Activated T-helper 2 cell treated with anti-CD3 and anti-CD28 coated beads, Interferon-gamma antibody, Interleukin-2, Interleukin-4, amounts not matched to agents 10 μg/mL and 5 μg/mL and 100 μg/mL, durations not matched to agents 14 hours and 24 hours and 36 hours (primary cell): ENCODE measurements at regions of chrX and their contacts with region 1.

Region 1: GRCh38 chrX:110450050-110450449 is 91.4 kb downstream of the RTL9 start:
- DNase-seq: peak; percentile 18
- H3K4me3 Mint-ChIP-seq: no peak overlapping the region
- H3K27ac Mint-ChIP-seq: no peak overlapping the region
- H3K4me1 Mint-ChIP-seq: no peaks in the 10 kb centered on the region
- H3K27me3 Mint-ChIP-seq: no peaks in the 10 kb centered on the region

Region 2: GRCh38 chrX:110665223-110666002 is 215.4 kb after region 1 on chrX:
- intact Hi-C with region 1: loop called (anchors 1 kb)
- DNase-seq: no peak
- H3K4me3 Mint-ChIP-seq: no peak overlapping the region
- H3K27ac Mint-ChIP-seq: no peak overlapping the region
- H3K4me1 Mint-ChIP-seq: no peaks in the 10 kb centered on the region
- H3K27me3 Mint-ChIP-seq: no peaks in the 10 kb centered on the region

Region 3: GRCh38 chrX:110847334-110847733 is 397.3 kb after region 1 on chrX:
- intact Hi-C with region 1: loop called (anchors 1 kb)
- DNase-seq: no peak
- H3K4me3 Mint-ChIP-seq: no peak overlapping the region
- H3K27ac Mint-ChIP-seq: no peak overlapping the region
- H3K4me1 Mint-ChIP-seq: no peaks in the 10 kb centered on the region
- H3K27me3 Mint-ChIP-seq: no peaks in the 10 kb centered on the region

Region 4: GRCh38 chrX:111244235-111244750 is 794.2 kb after region 1 on chrX:
- intact Hi-C with region 1: loop called (anchors 5 kb)
- DNase-seq: no peak
- H3K4me3 Mint-ChIP-seq: no peak overlapping the region
- H3K27ac Mint-ChIP-seq: no peak overlapping the region
- H3K4me1 Mint-ChIP-seq: peaks cover 3% of the 10 kb centered on the region
- H3K27me3 Mint-ChIP-seq: no peaks in the 10 kb centered on the region